ENCODE measurements at regions of chr9 and their contacts with region 1.

Region 1: DNA sequence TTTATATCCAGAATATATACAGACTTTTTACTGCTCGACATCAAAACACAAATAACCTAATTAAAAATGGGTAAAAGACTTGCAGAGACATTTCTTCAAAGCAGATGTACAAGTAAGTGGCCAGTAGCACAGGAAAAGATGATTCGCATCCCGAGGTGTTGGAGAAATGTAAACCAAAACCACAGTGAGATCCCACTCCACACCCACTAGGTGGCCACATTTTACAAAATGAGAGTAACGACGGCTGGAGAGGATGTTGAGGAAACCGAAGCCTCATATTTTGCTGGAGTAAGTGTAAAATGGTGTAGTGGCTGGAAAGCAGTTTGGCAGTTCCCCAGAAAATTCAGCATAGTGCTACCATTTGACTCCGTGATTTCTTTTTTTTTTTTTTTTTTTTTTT is 21.2 kb upstream of the GBGT1 start:
- DNase-seq: peak; percentile 55
- H3K4me3 ChIP-seq: no peak overlapping the region
- H3K27ac ChIP-seq: no peak overlapping the region
- H3K4me1 ChIP-seq: no peaks in the 10 kb centered on the region
- H3K27me3 ChIP-seq: no peaks in the 10 kb centered on the region
- CTCF ChIP-seq: peak; percentile 42

Region 2: GRCh38 chr9:133282464-133283238 is 97.7 kb after region 1 on chr9:
- intact Hi-C with region 1: loop called (anchors 10 kb)
- DNase-seq: peak; percentile 79
- H3K4me3 ChIP-seq: no peak overlapping the region
- H3K27ac ChIP-seq: peak overlapping the region; percentile 86
- H3K4me1 ChIP-seq: peaks cover 14% of the 10 kb centered on the region
- H3K27me3 ChIP-seq: no peaks in the 10 kb centered on the region
- CTCF ChIP-seq: no peak

Region 3: DNA sequence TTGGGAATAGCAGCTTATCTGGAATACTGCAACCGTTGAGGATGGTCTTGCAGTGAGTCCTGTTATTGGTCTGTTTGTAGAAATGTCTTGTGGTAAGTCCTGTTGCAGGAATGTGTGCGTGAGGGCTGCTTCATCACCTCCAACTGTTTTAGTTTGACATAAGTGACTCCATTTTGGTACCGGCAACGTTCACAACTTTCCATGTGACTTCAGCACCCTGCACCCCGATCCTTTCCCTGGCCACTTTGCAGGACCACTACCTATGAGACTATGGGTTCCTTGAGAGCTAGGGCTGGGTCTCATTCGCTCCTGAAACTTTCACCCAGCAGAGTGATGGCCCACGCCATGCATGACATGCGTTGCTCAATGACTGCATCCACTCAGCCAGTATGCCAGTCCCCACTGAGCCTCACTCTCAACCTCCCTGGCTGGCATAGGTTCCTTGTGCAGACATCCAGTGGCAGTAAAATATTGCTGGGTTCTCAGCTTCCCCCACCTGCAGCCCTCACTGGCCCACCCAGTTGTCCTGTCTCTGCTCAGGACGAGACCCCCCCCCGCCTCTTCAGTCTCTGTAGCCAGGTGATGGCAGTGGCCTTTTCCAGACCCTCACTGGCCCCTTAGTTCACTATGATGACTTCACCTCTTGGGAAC is 143.0 kb after region 1 on chr9:
- intact Hi-C with region 1: loop called (anchors 2 kb)
- DNase-seq: no peak
- H3K4me3 ChIP-seq: no peak overlapping the region
- H3K27ac ChIP-seq: no peak overlapping the region
- H3K4me1 ChIP-seq: no peaks in the 10 kb centered on the region
- H3K27me3 ChIP-seq: no peaks in the 10 kb centered on the region
- CTCF ChIP-seq: no peak

Region 4: GRCh38 chr9:133406480-133407307 is 221.7 kb after region 1 on chr9:
- intact Hi-C with region 1: loop called (anchors 2 kb)
- DNase-seq: peak; percentile 76
- H3K4me3 ChIP-seq: no peak overlapping the region
- H3K27ac ChIP-seq: no peak overlapping the region
- H3K4me1 ChIP-seq: no peaks in the 10 kb centered on the region
- H3K27me3 ChIP-seq: no peaks in the 10 kb centered on the region
- CTCF ChIP-seq: peak; percentile 87

Region 5: DNA sequence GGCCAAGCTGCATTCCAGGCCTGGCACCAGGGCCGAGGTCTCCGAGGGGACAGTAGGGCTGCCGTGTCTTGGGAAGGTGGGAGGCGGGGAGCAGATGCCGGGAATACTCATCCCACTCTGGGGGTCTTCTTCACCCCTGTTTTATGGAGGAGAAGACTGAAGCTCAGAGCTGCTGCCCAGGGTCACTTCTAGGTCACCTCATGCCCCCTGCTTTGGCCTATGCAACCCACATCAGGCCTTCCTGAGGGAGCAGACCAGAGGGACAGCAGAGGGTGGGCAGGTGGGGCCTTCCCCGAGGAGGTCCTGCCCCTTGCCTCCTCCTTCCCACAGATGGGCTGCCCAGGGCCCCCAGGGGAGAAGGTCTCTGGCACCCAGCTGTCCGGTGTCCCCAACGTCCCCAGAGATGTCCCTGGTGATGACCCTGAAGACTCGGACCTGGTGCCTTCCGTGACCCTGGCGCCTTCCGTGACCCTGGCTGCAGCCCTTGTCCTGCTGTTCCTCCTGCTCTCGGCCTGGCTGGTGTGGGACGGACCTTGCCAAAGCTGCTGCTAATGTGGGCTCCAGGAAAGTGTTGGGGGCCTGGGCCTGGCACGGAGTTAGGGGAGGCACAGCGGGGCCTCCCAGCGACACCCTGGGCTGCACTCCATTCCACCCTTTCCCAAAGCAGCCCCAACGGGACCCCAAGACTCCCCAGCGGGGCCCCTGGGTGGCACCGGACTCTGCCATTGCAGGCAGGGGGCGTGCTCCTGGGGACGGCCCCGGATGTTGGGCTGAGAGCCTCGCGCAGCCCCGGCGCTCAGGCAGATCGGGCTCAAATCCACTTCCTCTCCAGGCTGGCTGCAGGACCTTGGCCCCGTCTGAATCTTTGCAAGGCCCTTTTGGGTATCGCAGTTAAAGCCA is 300.6 kb after region 1 on chr9:
- intact Hi-C with region 1: loop called (anchors 5 kb)
- DNase-seq: no peak
- H3K4me3 ChIP-seq: peak overlapping the region; percentile 7
- H3K27ac ChIP-seq: no peak overlapping the region
- H3K4me1 ChIP-seq: no peaks in the 10 kb centered on the region
- H3K27me3 ChIP-seq: no peaks in the 10 kb centered on the region
- CTCF ChIP-seq: no peak